ENCODE measurements at regions of chr2 and their contacts with region 1.

Region 1: GRCh38 chr2:17479875-17480274 is 38.4 kb downstream of the RAD51AP2 start:
- DNase-seq: peak; percentile 96
- ATAC-seq: peak; percentile 99
- H3K4me3 ChIP-seq: peak overlapping the region in 1 of 3 experiments; percentile 34; a peak in 1 of 6 replicates
- H3K27ac ChIP-seq: peak overlapping the region; percentile 61
- H3K4me1 ChIP-seq: peaks cover 47% of the 10 kb centered on the region
- H3K27me3 ChIP-seq: no peaks in the 10 kb centered on the region
- CTCF ChIP-seq: no peak
- EP300 ChIP-seq: peak in 1 of 2 experiments; percentile 95; a peak in 2 of 4 replicates
- POLR2A ChIP-seq: no peak
- RAD21 ChIP-seq: no peak

Region 2: DNA sequence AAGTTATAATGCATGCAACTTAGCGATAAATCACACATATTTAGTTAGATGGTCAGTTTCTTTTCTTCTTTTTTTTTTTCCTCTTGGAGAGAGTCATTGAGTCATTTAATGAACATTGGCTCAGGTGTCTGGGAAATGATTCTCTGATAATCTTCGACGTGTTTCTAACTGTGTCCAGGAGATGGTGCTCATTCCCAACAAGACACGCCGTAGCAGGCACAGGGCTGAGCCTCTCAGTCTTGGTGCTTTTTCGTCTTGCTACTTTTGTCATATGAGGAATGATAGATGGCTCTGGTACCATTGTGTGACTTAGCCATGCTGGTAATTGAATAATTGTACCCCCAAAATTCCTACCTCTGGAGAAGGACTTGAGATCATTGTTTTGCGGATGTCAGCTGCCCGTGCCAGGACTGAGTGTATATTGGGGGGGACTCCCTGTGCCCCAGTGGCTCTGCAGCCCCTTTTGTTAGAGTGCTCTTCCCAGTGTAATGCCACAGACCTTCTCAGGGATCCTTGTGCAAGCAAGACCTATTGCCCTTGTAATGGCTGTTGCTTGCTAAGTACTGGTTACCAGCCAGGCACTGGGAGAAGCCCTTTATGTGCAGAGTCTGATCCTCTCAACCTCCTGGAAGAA is 706.7 kb before region 1 on chr2:
- CTCF ChIA-PET with region 1: no interaction called
- POLR2A ChIA-PET with region 1: no interaction called
- in situ Hi-C with region 1: no loop called
- intact Hi-C with region 1: no loop called
- DNase-seq: peak; percentile 43
- ATAC-seq: peak; percentile 81
- H3K4me3 ChIP-seq: no peak overlapping the region
- H3K27ac ChIP-seq: no peak overlapping the region
- H3K4me1 ChIP-seq: peaks cover 7% of the 10 kb centered on the region; the same call in 1 of the 2 replicates
- H3K27me3 ChIP-seq: no peaks in the 10 kb centered on the region
- CTCF ChIP-seq: peak; percentile 89
- EP300 ChIP-seq: no peak
- POLR2A ChIP-seq: no peak
- RAD21 ChIP-seq: peak; percentile 73

Region 3: GRCh38 chr2:17355608-17356329 is 124.1 kb before region 1 on chr2:
- CTCF ChIA-PET with region 1: no interaction called
- POLR2A ChIA-PET with region 1: no interaction called
- in situ Hi-C with region 1: no loop called
- intact Hi-C with region 1: no loop called
- DNase-seq: peak; percentile 23
- ATAC-seq: peak; percentile 77
- H3K4me3 ChIP-seq: no peak overlapping the region
- H3K27ac ChIP-seq: no peak overlapping the region
- H3K4me1 ChIP-seq: peaks cover 12% of the 10 kb centered on the region
- H3K27me3 ChIP-seq: no peaks in the 10 kb centered on the region
- CTCF ChIP-seq: no peak
- EP300 ChIP-seq: no peak; a peak in 1 of 4 replicates
- POLR2A ChIP-seq: no peak
- RAD21 ChIP-seq: no peak

Region 4: GRCh38 chr2:17518212-17519154 is 38.6 kb after region 1 on chr2 and contains the start of gene RAD51AP2:
- CTCF ChIA-PET with region 1: no interaction called
- POLR2A ChIA-PET with region 1: no interaction called
- in situ Hi-C with region 1: loop called (anchors 5 kb)
- intact Hi-C with region 1: loop called (anchors 1 kb)
- DNase-seq: peak; percentile 60
- ATAC-seq: peak; percentile 96
- H3K4me3 ChIP-seq: peak within 1 kb of the TSS; percentile 48 to 77 (median 75)
- H3K27ac ChIP-seq: no peak within 1 kb of the TSS
- H3K4me1 ChIP-seq: peaks cover 15% of the 10 kb centered on the region
- H3K27me3 ChIP-seq: peaks cover 0 to 14% of the 10 kb centered on the region in 2 experiments; a peak in 1 of 5 replicates
- CTCF ChIP-seq: no peak
- EP300 ChIP-seq: no peak
- POLR2A ChIP-seq: no peak
- RAD21 ChIP-seq: no peak
- total RNA-seq, gene RAD51AP2: 0.07 and 0.11 TPM in 2 replicates

Measured in HepG2 (cell line).